Activated CD8-positive, alpha-beta T cell treated with anti-CD3 and anti-CD28 coated beads, Interleukin-2, amount 10 ng/mL, durations not matched to agents 7 days and 5 days (primary cell): ENCODE measurements at regions of chr1 and their contacts with region 1.

Region 1: GRCh38 chr1:26417111-26417759 is 6.6 kb downstream of the LIN28A start:
- DNase-seq: peak; percentile 91
- ATAC-seq: peak; percentile 100
- H3K4me3 Mint-ChIP-seq: no peak overlapping the region
- H3K27ac Mint-ChIP-seq: no peak overlapping the region
- H3K4me1 Mint-ChIP-seq: peaks cover 7% of the 10 kb centered on the region
- H3K27me3 Mint-ChIP-seq: peaks cover 49% of the 10 kb centered on the region

Region 2: DNA sequence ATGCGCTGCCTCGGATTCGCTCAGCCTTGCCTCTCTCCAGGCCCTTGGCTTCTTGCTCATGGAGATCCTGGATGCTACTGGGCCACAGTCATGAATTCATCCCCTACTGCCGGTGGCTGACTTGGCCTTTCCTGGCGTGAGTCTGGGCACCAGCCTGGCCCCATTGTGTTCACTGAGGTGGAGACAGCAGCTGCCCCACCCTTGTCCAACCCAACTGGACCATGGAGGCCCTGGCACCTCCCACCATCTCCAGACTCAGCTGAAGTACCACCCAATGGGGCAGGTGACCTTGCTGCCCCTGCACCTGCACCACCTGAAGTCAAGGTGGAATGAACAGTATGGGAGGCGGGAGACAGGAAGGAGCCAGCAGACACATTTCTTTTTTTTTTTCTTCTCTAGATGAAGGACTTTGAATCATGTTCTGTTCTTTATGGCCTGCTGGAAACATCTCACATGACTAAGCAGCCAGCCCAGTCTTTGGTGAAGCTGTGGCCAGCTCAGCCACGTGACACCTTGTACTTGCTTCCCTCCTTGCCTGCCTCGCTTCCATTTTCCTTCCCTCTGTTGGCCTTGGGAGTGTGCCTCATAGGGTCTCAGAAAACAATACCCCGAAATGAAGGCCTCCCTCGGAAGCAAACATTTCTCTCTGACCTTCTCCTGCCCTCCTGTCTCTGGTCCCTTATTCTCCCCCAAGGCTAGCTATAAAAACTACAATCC is 367.5 kb before region 1 on chr1:
- CTCF ChIA-PET with region 1: no interaction called
- POLR2A ChIA-PET with region 1: no interaction called
- DNase-seq: no peak
- ATAC-seq: no peak
- H3K4me3 Mint-ChIP-seq: no peak overlapping the region
- H3K27ac Mint-ChIP-seq: no peak overlapping the region
- H3K4me1 Mint-ChIP-seq: peaks cover 20% of the 10 kb centered on the region
- H3K27me3 Mint-ChIP-seq: peaks cover 65% of the 10 kb centered on the region

Region 3: DNA sequence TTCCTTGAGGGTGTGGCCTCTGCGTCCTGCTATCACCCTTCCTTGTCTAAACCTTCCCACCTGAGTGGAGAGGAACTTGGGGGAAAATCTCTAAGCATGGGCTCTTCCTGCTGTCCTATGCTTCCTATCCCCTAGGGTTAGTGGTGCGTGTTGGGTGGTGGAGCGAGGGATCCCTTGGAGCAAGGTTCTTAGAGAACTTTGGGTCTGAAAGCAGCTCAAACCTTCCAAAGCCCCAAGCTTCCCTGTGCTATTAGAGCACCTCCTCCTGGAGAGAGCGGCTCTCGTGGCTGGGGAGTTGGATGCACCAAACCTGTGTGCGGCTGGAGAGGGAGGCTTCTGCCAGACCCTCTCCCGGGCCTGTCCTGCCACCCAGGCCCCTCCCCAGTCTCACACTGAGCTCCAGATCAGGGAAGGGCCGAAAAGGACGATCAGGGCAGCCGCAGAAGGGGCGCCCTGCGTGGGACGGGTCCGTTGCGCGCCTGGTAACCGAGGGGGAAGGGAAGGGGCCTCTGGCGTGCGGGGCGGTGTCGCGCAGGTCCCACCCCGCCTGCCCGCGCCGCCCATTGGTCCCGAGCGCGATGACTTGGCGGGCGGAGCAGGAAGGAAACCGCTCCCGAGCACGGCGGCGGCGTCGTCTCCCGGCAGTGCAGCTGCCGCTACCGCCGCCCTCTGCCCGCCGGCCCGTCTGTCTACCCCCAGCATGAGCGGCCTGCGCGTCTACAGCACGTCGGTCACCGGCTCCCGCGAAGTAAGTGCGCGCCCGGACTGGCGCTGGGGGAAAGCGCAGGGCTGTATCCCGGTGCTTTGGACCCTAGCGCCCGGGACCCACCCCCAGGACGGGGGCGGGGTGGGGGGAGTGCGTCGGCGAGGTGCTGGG is 137.5 kb before region 1 on chr1 and contains the start of gene SH3BGRL3:
- CTCF ChIA-PET with region 1: interaction called, 38 read pairs
- POLR2A ChIA-PET with region 1: no interaction called
- DNase-seq: peak; percentile 90
- ATAC-seq: peak; percentile 64
- H3K4me3 Mint-ChIP-seq: peak within 1 kb of the TSS; percentile 89
- H3K27ac Mint-ChIP-seq: peak within 1 kb of the TSS; percentile 96
- H3K4me1 Mint-ChIP-seq: peaks cover 85% of the 10 kb centered on the region
- H3K27me3 Mint-ChIP-seq: no peaks in the 10 kb centered on the region
- total RNA-seq, gene SH3BGRL3: 795 to 814 TPM

Region 4: GRCh38 chr1:26358411-26359384 is 58.5 kb before region 1 on chr1:
- CTCF ChIA-PET with region 1: interaction called, 48 read pairs
- POLR2A ChIA-PET with region 1: no interaction called
- DNase-seq: peak; percentile 89
- ATAC-seq: peak; percentile 85
- H3K4me3 Mint-ChIP-seq: peak overlapping the region; percentile 47
- H3K27ac Mint-ChIP-seq: peak overlapping the region; percentile 68
- H3K4me1 Mint-ChIP-seq: peaks cover 70% of the 10 kb centered on the region
- H3K27me3 Mint-ChIP-seq: peaks cover 8% of the 10 kb centered on the region

Region 5: GRCh38 chr1:26372039-26372438 is 45.2 kb before region 1 on chr1:
- CTCF ChIA-PET with region 1: interaction called, 34 read pairs
- POLR2A ChIA-PET with region 1: no interaction called
- DNase-seq: no peak
- ATAC-seq: no peak
- H3K4me3 Mint-ChIP-seq: no peak overlapping the region
- H3K27ac Mint-ChIP-seq: peak overlapping the region; percentile 90
- H3K4me1 Mint-ChIP-seq: peaks cover 87% of the 10 kb centered on the region
- H3K27me3 Mint-ChIP-seq: peaks cover 2% of the 10 kb centered on the region

Region 6: DNA sequence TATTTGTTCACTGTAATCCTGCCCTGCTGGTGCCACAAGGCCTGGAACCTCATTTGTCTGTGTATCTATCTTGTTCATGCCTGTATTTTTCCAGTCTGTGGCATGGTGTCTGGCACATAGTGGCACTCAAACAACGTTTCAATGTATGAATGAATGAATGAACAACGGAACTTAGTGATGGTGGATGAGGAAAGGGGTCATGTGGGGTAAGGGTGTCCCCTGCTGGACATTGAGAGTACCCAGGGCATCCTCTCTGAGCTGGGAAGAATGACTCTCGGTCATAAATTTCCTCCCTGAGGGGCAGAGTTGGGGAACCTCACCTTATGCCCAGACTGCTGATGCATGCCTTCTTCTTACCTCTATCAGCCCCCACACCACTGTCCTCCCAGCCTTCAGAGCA is 25.8 kb before region 1 on chr1:
- CTCF ChIA-PET with region 1: interaction called, 34 read pairs
- POLR2A ChIA-PET with region 1: no interaction called
- DNase-seq: peak; percentile 78
- ATAC-seq: peak; percentile 73
- H3K4me3 Mint-ChIP-seq: no peak overlapping the region
- H3K27ac Mint-ChIP-seq: peak overlapping the region; percentile 35
- H3K4me1 Mint-ChIP-seq: peaks cover 61% of the 10 kb centered on the region
- H3K27me3 Mint-ChIP-seq: peaks cover 3% of the 10 kb centered on the region

Region 7: GRCh38 chr1:26431979-26432695 is 14.9 kb after region 1 on chr1 and contains the start of gene DHDDS:
- CTCF ChIA-PET with region 1: interaction called, 63 read pairs
- POLR2A ChIA-PET with region 1: interaction called, 5 read pairs
- DNase-seq: peak; percentile 99
- ATAC-seq: peak; percentile 98
- H3K4me3 Mint-ChIP-seq: peak within 1 kb of the TSS; percentile 91
- H3K27ac Mint-ChIP-seq: peak within 1 kb of the TSS; percentile 93
- H3K4me1 Mint-ChIP-seq: peaks cover 26% of the 10 kb centered on the region
- H3K27me3 Mint-ChIP-seq: no peaks in the 10 kb centered on the region
- total RNA-seq, gene DHDDS: 48.3 to 49.5 TPM

Region 8: DNA sequence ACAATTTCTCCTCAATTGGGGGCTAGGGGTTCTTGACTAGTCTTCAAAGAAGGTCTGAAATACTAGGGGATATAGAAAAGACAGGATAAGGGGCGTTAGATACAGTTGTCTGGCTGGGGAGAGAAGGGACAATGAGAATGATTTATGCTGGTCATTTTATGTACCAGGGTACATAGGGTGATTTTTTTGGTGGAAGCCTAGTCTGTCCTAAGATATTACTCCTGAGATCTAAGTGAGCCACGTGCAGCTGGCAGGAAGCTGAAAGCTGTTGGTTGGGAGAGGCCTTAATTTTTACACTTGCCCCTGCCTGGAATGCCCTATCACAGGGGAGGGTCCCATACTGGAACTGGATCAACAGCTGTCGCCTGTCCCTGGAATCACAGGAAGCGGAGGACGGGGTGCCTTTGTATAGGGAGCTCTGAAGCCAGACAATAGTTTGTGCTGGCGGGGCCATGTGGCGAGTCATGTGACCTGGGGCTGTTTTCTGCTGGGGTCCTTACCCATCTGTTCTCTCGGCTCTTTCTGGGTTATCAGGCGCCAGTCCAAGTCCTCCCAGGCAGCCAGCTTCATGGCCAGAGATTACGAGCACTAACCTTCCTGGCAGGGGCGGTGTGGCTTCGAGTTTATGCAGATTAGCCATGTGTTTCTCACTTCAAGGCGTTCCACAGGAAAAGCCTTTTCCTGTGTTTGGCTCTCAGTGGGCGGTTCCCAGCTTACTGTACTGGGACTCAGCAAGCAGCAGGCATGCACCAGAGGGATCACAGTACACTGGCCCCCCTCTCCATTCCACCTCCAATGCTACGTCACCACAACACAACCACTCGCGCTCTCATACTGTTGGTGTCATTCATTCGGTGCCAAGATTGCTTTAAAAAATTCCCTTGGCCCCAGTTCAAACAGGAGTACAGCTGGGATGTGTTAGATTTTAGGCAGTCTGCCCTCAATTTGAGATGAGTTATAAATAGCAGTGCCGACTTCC is 306.1 kb after region 1 on chr1:
- CTCF ChIA-PET with region 1: no interaction called
- POLR2A ChIA-PET with region 1: no interaction called
- DNase-seq: peak; percentile 48
- ATAC-seq: peak; percentile 68
- H3K4me3 Mint-ChIP-seq: peak overlapping the region; percentile 42
- H3K27ac Mint-ChIP-seq: peak overlapping the region; percentile 56
- H3K4me1 Mint-ChIP-seq: peaks cover 86% of the 10 kb centered on the region
- H3K27me3 Mint-ChIP-seq: no peaks in the 10 kb centered on the region